Right ventricle myocardium inferior (tissue), 1 donor: ENCODE measurements at regions of chr10 and their contacts with region 1.

Region 1: GRCh38 chr10:29590915-29591650 is 43.7 kb downstream of the SVIL start:
- DNase-seq: no peak
- ATAC-seq: no peak

Region 2: DNA sequence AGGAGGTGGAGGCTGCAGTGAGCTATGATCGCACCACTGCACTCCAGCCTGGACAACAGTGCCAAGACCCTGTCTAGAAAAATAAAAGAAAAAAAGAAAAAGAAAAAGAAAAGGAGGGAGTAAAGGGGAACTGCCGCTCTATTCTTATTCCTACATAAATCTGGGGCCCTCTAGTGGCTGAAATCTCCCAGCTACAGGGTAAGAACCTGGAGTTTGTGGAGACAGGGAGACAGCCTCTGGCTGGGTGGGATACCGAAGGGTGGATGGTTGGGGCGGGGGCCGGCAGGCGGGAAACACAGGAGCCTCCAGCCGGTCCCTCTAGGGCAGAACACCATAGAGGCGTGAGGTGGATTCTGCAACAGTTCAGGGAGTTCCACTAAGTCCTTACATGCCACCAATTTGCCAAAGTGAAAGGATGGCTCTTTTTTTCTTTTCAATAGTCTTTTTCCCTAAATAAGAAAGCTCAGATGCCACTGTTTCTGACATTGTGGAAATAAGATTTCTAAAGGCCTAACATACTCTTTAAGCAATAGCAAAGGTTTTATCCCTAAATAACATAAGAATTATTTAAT is 73.6 kb before region 1 on chr10:
- intact Hi-C with region 1: loop called (anchors 5 kb)
- DNase-seq: no peak
- ATAC-seq: peak; percentile 41